ENCODE measurements at regions of chr1 and their contacts with region 1.

Region 1: GRCh38 chr1:151070474-151071276 is at the start of gene GABPB2:
- DNase-seq: peak; percentile 76 to 92 (median 86)
- H3K4me3 ChIP-seq: peak within 1 kb of the TSS; percentile 88
- H3K4me3 Mint-ChIP-seq: peak within 1 kb of the TSS; percentile 96 to 99 (median 98)
- H3K27ac ChIP-seq: peak within 1 kb of the TSS; percentile 94
- H3K27ac Mint-ChIP-seq: peak within 1 kb of the TSS; percentile 96 to 100 (median 100)
- H3K4me1 ChIP-seq: peaks cover 11% of the 10 kb centered on the region
- H3K4me1 Mint-ChIP-seq: peaks cover 25 to 31% (median 31%) of the 10 kb centered on the region in 3 donors
- H3K27me3 ChIP-seq: no peaks in the 10 kb centered on the region
- H3K27me3 Mint-ChIP-seq: no peaks in the 10 kb centered on the region
- total RNA-seq, gene GABPB2: 19.2 to 19.4 TPM

Region 2: DNA sequence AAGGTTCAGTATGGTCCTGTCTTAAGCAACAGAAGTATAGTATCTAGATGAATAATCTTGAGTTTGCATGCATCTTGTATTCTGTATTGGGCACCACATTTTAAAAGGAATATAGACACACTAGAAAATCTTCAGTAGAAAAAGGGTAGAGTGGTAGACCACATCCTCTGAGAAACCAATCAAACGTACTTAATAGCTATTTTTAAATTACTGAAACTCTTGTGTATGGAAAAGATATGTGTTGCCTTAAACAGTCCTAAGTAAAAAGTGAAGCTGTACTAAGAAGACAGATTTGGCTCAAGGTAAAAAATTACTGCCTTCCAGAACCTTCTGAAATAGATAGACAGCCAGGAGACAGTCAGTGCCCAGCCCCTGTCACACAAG is 180.7 kb before region 1 on chr1:
- CTCF ChIA-PET with region 1: no interaction called
- POLR2A ChIA-PET with region 1: no interaction called
- DNase-seq: peak in 1 of 5 donors; percentile 39
- H3K4me3 ChIP-seq: no peak overlapping the region
- H3K4me3 Mint-ChIP-seq: peak overlapping the region in 5 of 7 donors; percentile 2 to 51 (median 17)
- H3K27ac ChIP-seq: no peak overlapping the region
- H3K27ac Mint-ChIP-seq: peak overlapping the region in 2 of 8 donors; percentile 1 to 20
- H3K4me1 ChIP-seq: peaks cover 15% of the 10 kb centered on the region
- H3K4me1 Mint-ChIP-seq: peaks cover 13 to 20% (median 18%) of the 10 kb centered on the region in 3 donors
- H3K27me3 ChIP-seq: no peaks in the 10 kb centered on the region
- H3K27me3 Mint-ChIP-seq: peaks cover 0 to 2% of the 10 kb centered on the region in 2 donors

Region 3: DNA sequence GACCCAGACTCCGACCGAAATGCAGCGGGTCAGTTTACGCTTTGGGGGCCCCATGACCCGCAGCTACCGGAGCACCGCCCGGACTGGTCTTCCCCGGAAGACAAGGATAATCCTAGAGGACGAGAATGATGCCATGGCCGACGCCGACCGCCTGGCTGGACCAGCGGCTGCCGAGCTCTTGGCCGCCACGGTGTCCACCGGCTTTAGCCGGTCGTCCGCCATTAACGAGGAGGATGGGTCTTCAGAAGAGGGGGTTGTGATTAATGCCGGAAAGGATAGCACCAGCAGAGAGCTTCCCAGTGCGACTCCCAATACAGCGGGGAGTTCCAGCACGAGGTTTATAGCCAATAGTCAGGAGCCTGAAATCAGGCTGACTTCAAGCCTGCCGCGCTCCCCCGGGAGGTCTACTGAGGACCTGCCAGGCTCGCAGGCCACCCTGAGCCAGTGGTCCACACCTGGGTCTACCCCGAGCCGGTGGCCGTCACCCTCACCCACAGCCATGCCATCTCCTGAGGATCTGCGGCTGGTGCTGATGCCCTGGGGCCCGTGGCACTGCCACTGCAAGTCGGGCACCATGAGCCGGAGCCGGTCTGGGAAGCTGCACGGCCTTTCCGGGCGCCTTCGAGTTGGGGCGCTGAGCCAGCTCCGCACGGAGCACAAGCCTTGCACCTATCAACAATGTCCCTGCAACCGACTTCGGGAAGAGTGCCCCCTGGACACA is 22.6 kb before region 1 on chr1:
- CTCF ChIA-PET with region 1: interaction called, 15 read pairs
- POLR2A ChIA-PET with region 1: interaction called, 6 read pairs
- DNase-seq: peak; percentile 38 to 76 (median 63)
- H3K4me3 ChIP-seq: peak overlapping the region; percentile 76
- H3K4me3 Mint-ChIP-seq: peak overlapping the region; percentile 88 to 96 (median 91)
- H3K27ac ChIP-seq: peak overlapping the region; percentile 53
- H3K27ac Mint-ChIP-seq: peak overlapping the region; percentile 87 to 98 (median 93)
- H3K4me1 ChIP-seq: peaks cover 54% of the 10 kb centered on the region
- H3K4me1 Mint-ChIP-seq: peaks cover 63 to 78% (median 74%) of the 10 kb centered on the region in 3 donors
- H3K27me3 ChIP-seq: no peaks in the 10 kb centered on the region
- H3K27me3 Mint-ChIP-seq: no peaks in the 10 kb centered on the region

Region 4: DNA sequence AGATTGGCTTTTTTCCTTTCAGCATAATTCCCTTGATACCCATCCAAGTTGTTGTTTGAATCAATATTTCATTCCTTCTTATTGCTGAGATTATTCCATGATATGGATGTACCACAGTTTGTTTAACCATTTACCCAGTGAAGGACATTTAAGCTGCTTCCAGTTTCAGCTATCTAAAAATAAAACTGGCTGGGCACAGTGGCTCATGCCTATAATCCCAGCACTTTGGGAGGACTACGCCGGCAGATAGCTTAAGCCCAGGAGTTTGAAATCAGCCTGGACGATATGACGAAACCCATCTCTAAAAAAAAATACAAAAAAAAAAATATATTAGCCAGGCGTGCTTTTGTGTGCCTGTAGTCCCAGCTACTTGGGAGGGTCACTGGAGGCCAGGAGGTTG is 43.2 kb after region 1 on chr1:
- CTCF ChIA-PET with region 1: no interaction called
- POLR2A ChIA-PET with region 1: no interaction called
- DNase-seq: no peak
- H3K4me3 ChIP-seq: no peak overlapping the region
- H3K4me3 Mint-ChIP-seq: no peak overlapping the region
- H3K27ac ChIP-seq: no peak overlapping the region
- H3K27ac Mint-ChIP-seq: no peak overlapping the region
- H3K4me1 ChIP-seq: no peaks in the 10 kb centered on the region
- H3K4me1 Mint-ChIP-seq: no peaks in the 10 kb centered on the region
- H3K27me3 ChIP-seq: no peaks in the 10 kb centered on the region
- H3K27me3 Mint-ChIP-seq: no peaks in the 10 kb centered on the region